OCI-LY7 (cell line): ENCODE measurements at regions of chr16 and their contacts with region 1.

Region 1: DNA sequence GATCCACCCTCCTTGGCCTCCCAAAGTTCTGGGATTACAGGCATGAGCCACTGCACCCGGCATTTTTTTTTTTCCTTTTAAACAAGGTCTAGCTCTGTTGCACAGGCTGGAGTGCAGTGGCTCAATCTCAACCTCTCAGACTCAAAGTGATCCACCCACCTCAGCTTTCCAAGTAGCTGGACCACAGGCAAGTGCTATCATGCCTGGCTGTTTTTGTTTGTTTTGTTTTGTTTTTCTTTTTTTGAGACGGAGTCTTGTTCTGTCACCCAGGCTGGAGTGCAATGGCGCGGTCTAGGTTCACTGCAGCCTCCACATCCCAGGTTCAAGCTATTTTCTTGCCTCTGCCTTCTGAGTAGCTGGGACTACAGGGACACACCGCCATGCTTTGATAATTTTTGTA is 19.0 kb upstream of the ZC3H7A start:
- DNase-seq: no peak
- H3K4me3 ChIP-seq: no peak overlapping the region
- H3K27ac ChIP-seq: no peak overlapping the region
- H3K4me1 ChIP-seq: peaks cover 11% of the 10 kb centered on the region
- CTCF ChIP-seq: no peak

Region 2: DNA sequence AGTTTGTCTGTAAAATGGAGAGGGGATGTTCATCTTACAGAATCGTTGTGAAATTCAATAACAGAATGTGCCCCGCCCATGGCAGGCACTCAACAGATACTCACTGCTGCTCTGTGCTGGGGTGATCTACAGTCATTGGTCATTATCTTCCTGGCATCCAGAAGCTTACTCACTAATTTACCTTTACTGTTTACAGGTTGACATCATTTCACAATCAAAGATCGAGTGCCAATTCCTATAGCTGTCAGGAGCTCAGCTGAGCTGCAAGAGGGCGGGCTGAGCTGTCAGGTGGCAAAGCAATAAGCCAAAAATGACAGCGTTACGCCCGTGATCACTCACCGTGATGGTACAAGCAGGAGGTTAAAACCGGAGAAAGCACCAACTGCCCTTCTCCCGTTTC is 280.6 kb before region 1 on chr16:
- CTCF ChIA-PET with region 1: no interaction called
- POLR2A ChIA-PET with region 1: no interaction called
- intact Hi-C with region 1: loop called (anchors 1 kb)
- DNase-seq: no peak
- H3K4me3 ChIP-seq: no peak overlapping the region
- H3K27ac ChIP-seq: no peak overlapping the region
- H3K4me1 ChIP-seq: peaks cover 7% of the 10 kb centered on the region
- CTCF ChIP-seq: no peak

Region 3: DNA sequence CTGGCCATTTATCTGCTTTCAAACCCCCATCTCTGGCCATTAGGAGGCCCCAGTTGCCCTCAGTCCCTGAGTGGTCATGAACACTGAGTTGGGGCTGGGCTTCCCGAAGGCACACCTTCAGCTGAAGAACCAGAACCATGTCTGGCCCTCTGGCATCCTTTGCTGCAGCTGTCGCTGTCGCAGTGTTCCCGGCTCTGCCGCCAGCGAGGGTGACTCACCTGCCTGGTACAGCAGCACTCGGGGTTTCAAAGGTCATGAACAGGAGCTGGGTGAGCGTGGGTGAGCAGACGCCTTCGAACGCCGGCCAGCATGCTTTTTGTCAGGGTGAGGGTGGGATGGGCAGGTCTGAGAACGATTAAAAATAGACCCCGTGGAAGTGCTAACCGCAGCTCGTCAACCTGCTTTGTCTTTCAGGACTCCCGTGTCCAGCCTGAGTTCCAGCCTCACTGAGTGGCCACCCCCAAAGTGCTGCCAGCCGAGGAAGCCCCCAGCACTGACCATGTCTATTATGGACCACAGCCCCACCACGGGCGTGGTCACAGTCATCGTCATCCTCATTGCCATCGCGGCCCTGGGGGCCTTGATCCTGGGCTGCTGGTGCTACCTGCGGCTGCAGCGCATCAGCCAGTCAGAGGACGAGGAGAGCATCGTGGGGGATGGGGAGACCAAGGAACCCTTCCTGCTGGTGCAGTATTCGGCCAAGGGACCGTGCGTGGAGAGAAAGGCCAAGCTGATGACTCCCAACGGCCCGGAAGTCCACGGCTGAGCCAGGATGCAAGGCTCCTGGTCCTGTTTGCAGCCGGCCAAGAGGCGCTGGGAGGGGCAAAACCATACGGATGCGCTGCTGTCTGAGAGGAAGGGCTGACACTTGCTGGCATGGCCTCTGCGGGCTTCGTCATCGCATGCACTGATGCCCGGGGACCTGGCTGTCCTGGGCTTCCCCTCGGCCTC is 140.3 kb before region 1 on chr16:
- CTCF ChIA-PET with region 1: no interaction called
- POLR2A ChIA-PET with region 1: no interaction called
- intact Hi-C with region 1: no loop called
- DNase-seq: no peak
- H3K4me3 ChIP-seq: no peak overlapping the region
- H3K27ac ChIP-seq: peak overlapping the region; percentile 98
- H3K4me1 ChIP-seq: peaks cover 99% of the 10 kb centered on the region
- CTCF ChIP-seq: no peak

Region 4: GRCh38 chr16:12132290-12132689 is 316.2 kb after region 1 on chr16:
- CTCF ChIA-PET with region 1: no interaction called
- POLR2A ChIA-PET with region 1: no interaction called
- intact Hi-C with region 1: no loop called
- DNase-seq: no peak
- H3K4me3 ChIP-seq: no peak overlapping the region
- H3K27ac ChIP-seq: no peak overlapping the region
- H3K4me1 ChIP-seq: no peaks in the 10 kb centered on the region
- CTCF ChIP-seq: no peak